ENCODE measurements at regions of chr1 and their contacts with region 1.

Region 1: DNA sequence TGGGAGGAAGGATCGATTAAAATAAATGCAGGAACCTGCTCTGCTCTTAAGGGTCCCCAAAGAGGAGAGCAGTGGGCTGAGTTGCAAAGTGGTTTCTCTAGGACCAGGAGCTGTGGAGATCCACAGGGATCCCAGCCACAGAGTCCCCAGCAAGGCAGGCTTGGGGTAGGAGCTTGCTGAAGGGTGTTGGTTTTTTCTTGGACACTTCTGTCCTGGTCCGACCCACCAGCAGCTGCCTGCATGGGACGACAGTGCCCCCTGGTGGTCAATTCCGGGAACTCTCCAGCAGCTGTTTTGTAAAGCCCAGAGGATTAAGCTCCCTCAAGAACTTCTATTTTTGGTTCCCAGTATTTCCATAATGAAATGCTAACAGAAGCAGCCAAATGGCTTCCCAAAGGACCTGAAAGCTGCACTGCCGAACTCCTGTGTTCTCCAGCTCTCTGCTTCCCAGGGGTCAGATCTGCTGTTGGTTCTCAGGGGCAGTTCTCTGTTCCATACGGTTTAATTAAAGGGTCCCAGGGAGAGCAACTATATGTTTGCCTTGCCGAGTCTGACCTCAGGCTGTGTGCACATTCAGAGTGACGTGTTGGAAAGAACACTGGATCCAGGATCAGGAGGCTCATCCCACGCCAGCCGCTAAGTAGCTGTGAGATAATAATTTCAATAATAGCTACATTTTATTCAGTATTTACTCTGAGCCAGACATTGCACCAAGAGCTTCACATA is 23.2 kb downstream of the NENF start:
- DNase-seq: peak; percentile 89
- ATAC-seq: peak; percentile 76 to 88

Region 2: GRCh38 chr1:211680752-211681327 is 775.1 kb before region 1 on chr1:
- intact Hi-C with region 1: loop called in 1 of 2 experiments (anchors 5 kb)
- DNase-seq: peak; percentile 66
- ATAC-seq: peak; percentile 91 to 93

Region 3: GRCh38 chr1:212062832-212063438 is 393.0 kb before region 1 on chr1:
- intact Hi-C with region 1: loop called in 1 of 2 experiments (anchors 5 kb)
- DNase-seq: no peak
- ATAC-seq: peak; percentile 48 to 55

Region 4: DNA sequence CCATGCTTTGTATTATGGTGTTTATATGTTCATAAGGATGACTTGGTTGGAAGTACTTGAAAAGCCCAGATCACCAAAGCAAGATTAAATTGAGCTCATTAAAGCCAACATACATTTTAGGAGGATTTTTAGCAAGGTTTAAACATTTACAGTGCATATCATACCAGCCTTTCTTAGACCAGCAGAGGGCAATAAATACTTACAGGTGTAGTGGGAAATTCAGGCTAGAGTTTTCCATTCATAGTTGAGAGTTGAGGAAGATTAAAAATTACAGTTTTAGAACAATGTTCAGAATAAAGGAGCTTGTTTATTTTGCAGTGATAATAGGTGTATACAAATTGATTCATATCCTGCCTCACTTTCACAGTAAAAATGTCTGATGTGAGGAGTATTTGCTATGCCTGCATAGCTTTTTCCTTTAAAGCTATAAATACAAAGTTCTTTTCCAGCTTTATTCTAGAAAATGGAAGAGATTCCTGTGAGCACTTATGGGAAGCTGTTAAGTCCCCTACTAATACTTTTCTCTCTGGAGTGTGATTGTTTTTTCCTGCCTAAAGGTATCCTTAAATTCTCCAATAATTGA is 385.2 kb before region 1 on chr1:
- intact Hi-C with region 1: loop called in 1 of 2 experiments (anchors 2 kb)
- DNase-seq: no peak
- ATAC-seq: peak; percentile 71 to 77

Region 5: DNA sequence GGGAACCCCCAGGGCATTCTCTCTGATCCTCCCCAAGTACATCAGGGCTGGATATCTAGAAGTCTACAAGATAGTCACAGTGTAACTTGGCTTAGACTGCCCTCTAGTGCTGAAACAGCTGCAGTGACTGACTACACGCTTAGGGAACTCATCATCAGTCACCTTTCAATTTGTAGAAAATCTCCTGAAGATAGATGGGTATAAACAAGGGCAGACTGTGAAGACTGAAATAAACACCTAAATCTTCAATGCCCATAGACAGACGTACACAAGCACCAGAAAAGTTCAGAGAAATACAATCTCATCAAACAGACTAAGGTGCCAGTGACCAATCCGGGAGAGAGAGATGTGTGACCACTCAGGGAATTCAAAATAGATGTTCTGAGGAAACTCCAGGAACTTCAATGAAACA is 87.9 kb before region 1 on chr1:
- intact Hi-C with region 1: loop called (anchors 5 to 10 kb)
- DNase-seq: no peak
- ATAC-seq: peak; percentile 78 to 89

Region 6: GRCh38 chr1:212683357-212683722 is 227.4 kb after region 1 on chr1:
- intact Hi-C with region 1: no loop called
- DNase-seq: no peak
- ATAC-seq: peak in 1 of 2 donors; percentile 73

Measured in left cardiac atrium (tissue), 4 donors.